ENCODE measurements at regions of chr16 and their contacts with region 1.

Region 1: GRCh38 chr16:50210266-50211038 is 55.9 kb upstream of the ADCY7 start:
- DNase-seq: peak; percentile 58
- CTCF ChIP-seq: peak; percentile 84

Region 2: GRCh38 chr16:50065624-50066481 is 144.6 kb before region 1 on chr16 and contains the start of gene HEATR3:
- in situ Hi-C with region 1: loop called (anchors 10 kb)
- DNase-seq: peak; percentile 95
- CTCF ChIP-seq: no peak

Region 3: GRCh38 chr16:50266337-50267091 is 56.1 kb after region 1 on chr16 and contains the start of gene ADCY7:
- in situ Hi-C with region 1: no loop called
- DNase-seq: peak; percentile 78
- CTCF ChIP-seq: no peak

Region 4: GRCh38 chr16:50284131-50284911 is 73.9 kb after region 1 on chr16:
- in situ Hi-C with region 1: no loop called
- DNase-seq: no peak
- CTCF ChIP-seq: no peak

Region 5: DNA sequence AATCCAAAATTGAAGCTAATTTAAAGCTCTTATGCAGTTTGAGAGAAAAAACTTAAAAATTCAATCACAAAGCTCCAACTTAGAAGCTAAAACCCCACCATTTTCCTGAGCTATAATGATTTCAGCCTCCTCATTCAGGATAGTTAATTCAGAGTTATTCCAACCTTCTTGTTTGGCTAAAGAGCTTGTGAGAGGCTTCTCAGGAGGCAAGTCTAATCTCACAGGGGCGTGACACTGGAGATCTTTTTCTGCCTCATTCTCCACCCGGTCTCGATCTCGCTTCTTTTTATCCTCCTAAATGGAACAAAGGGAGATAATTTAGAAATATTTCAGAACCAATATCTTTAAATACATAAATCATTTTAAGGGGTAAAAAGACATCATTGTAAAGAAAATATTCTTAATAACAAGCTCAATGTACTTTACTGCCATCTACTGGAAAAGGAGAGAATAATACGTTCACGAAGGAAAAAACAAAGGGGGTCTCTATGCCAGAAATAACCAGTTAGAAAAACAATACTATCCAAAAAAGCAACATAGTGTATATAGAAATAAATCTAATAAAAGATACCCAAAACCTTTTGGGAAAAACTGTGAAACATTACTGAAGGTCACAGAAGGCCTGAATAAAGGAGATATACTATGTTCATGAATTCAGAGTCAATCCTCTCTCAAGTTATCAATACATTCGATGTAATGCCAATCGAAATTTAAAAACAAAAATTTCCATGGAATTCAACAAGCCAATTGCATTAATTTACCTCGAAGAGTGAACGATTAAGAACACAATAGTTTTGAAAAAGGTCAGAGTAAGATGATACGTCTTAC is 144.4 kb after region 1 on chr16:
- in situ Hi-C with region 1: loop called (anchors 10 kb)
- DNase-seq: no peak
- CTCF ChIP-seq: peak; percentile 45

Region 6: GRCh38 chr16:50530277-50531236 is 320.1 kb after region 1 on chr16:
- in situ Hi-C with region 1: no loop called
- DNase-seq: no peak
- CTCF ChIP-seq: no peak